ENCODE measurements at regions of chr4 and their contacts with region 1.

Region 1: GRCh38 chr4:173318648-173319211 is 15.4 kb downstream of the HMGB2 start:
- DNase-seq: peak in 4 of 5 donors; percentile 28 to 37 (median 31)
- H3K4me3 ChIP-seq: no peak overlapping the region
- H3K4me3 Mint-ChIP-seq: no peak overlapping the region
- H3K27ac ChIP-seq: no peak overlapping the region
- H3K27ac Mint-ChIP-seq: no peak overlapping the region
- H3K4me1 ChIP-seq: no peaks in the 10 kb centered on the region
- H3K4me1 Mint-ChIP-seq: peaks cover 0 to 2% (median under 1%) of the 10 kb centered on the region in 4 donors
- H3K27me3 ChIP-seq: no peaks in the 10 kb centered on the region
- H3K27me3 Mint-ChIP-seq: no peaks in the 10 kb centered on the region

Region 2: GRCh38 chr4:173357939-173358338 is 39.2 kb after region 1 on chr4:
- CTCF ChIA-PET with region 1: interaction called, 14 read pairs
- POLR2A ChIA-PET with region 1: no interaction called
- intact Hi-C with region 1: no loop called
- DNase-seq: no peak
- H3K4me3 ChIP-seq: no peak overlapping the region
- H3K4me3 Mint-ChIP-seq: no peak overlapping the region
- H3K27ac ChIP-seq: no peak overlapping the region
- H3K27ac Mint-ChIP-seq: no peak overlapping the region
- H3K4me1 ChIP-seq: no peaks in the 10 kb centered on the region
- H3K4me1 Mint-ChIP-seq: no peaks in the 10 kb centered on the region
- H3K27me3 ChIP-seq: no peaks in the 10 kb centered on the region
- H3K27me3 Mint-ChIP-seq: peaks cover 2 to 4% of the 10 kb centered on the region in 2 donors

Region 3: GRCh38 chr4:173494013-173494970 is 175.6 kb after region 1 on chr4:
- CTCF ChIA-PET with region 1: interaction called, 16 read pairs
- POLR2A ChIA-PET with region 1: no interaction called
- intact Hi-C with region 1: loop called (anchors 1 kb)
- DNase-seq: peak; percentile 60 to 71 (median 66)
- H3K4me3 ChIP-seq: peak overlapping the region; percentile 46 to 54
- H3K4me3 Mint-ChIP-seq: peak overlapping the region; percentile 85 to 94 (median 88)
- H3K27ac ChIP-seq: no peak overlapping the region
- H3K27ac Mint-ChIP-seq: peak overlapping the region in 3 of 7 donors; percentile 19 to 66 (median 32)
- H3K4me1 ChIP-seq: peaks cover 11% of the 10 kb centered on the region
- H3K4me1 Mint-ChIP-seq: peaks cover 11 to 28% (median 18%) of the 10 kb centered on the region in 4 donors
- H3K27me3 ChIP-seq: no peaks in the 10 kb centered on the region
- H3K27me3 Mint-ChIP-seq: peaks cover 15 to 19% of the 10 kb centered on the region in 2 donors

Region 4: DNA sequence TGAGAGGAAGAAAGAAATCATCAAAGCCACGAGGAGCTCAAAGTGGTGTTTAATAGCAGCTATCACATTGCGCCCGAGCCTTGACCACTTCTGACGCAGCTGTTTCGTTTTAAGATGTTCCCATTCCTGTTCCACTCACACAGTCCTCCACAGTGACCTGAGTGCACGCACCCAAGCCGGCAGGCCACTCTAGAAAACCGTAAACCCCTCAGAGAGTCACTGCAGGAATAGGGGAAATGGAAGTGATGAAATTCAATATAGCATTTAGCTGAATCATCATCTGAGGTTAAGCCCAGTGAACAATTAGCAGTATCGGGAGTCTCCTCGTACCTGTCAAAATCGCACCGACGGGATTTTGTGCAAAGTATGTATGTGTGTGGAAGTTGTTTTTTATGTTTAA is 229.2 kb after region 1 on chr4:
- CTCF ChIA-PET with region 1: no interaction called
- POLR2A ChIA-PET with region 1: no interaction called
- intact Hi-C with region 1: no loop called
- DNase-seq: no peak
- H3K4me3 ChIP-seq: no peak overlapping the region
- H3K4me3 Mint-ChIP-seq: no peak overlapping the region
- H3K27ac ChIP-seq: no peak overlapping the region
- H3K27ac Mint-ChIP-seq: no peak overlapping the region
- H3K4me1 ChIP-seq: no peaks in the 10 kb centered on the region
- H3K4me1 Mint-ChIP-seq: no peaks in the 10 kb centered on the region
- H3K27me3 ChIP-seq: peaks cover 4% of the 10 kb centered on the region
- H3K27me3 Mint-ChIP-seq: peaks cover 28 to 37% of the 10 kb centered on the region in 2 donors